ENCODE measurements at regions of chr7 and their contacts with region 1.

Region 1: GRCh38 chr7:23531794-23532489 is at the start of gene TRA2A:
- DNase-seq: peak; percentile 97
- H3K4me3 ChIP-seq: peak within 1 kb of the TSS; percentile 99
- H3K4me3 Mint-ChIP-seq: peak within 1 kb of the TSS; percentile 91
- H3K27ac Mint-ChIP-seq: peak within 1 kb of the TSS; percentile 99
- H3K4me1 ChIP-seq: peaks cover 19% of the 10 kb centered on the region
- H3K4me1 Mint-ChIP-seq: peaks cover 16% of the 10 kb centered on the region
- H3K27me3 ChIP-seq: no peaks in the 10 kb centered on the region
- H3K27me3 Mint-ChIP-seq: no peaks in the 10 kb centered on the region
- CTCF ChIP-seq: no peak
- total RNA-seq, gene TRA2A: 123 and 132 TPM in 2 replicates

Region 2: GRCh38 chr7:23373151-23374004 is 158.6 kb before region 1 on chr7:
- CTCF ChIA-PET with region 1: no interaction called
- POLR2A ChIA-PET with region 1: no interaction called
- intact Hi-C with region 1: loop called (anchors 5 kb)
- DNase-seq: no peak
- H3K4me3 ChIP-seq: no peak overlapping the region
- H3K4me3 Mint-ChIP-seq: no peak overlapping the region
- H3K27ac Mint-ChIP-seq: peak overlapping the region; percentile 23
- H3K4me1 ChIP-seq: peaks cover 49% of the 10 kb centered on the region
- H3K4me1 Mint-ChIP-seq: peaks cover 48% of the 10 kb centered on the region
- H3K27me3 ChIP-seq: no peaks in the 10 kb centered on the region
- H3K27me3 Mint-ChIP-seq: no peaks in the 10 kb centered on the region
- CTCF ChIP-seq: no peak

Region 3: GRCh38 chr7:23491503-23491902 is 40.4 kb before region 1 on chr7:
- CTCF ChIA-PET with region 1: no interaction called
- POLR2A ChIA-PET with region 1: no interaction called
- intact Hi-C with region 1: no loop called
- DNase-seq: no peak
- H3K4me3 ChIP-seq: no peak overlapping the region
- H3K4me3 Mint-ChIP-seq: no peak overlapping the region
- H3K27ac Mint-ChIP-seq: no peak overlapping the region
- H3K4me1 ChIP-seq: peaks cover 17% of the 10 kb centered on the region
- H3K4me1 Mint-ChIP-seq: peaks cover 6% of the 10 kb centered on the region
- H3K27me3 ChIP-seq: no peaks in the 10 kb centered on the region
- H3K27me3 Mint-ChIP-seq: no peaks in the 10 kb centered on the region
- CTCF ChIP-seq: no peak

Measured in Caco-2 (cell line).